Activated CD4-positive, alpha-beta T cell treated with anti-CD3 and anti-CD28 coated beads, Interleukin-2, amount 10 ng/mL, durations not matched to agents 24 days and 14 days (primary cell): ENCODE measurements at regions of chr13 and their contacts with region 1.

Region 1: DNA sequence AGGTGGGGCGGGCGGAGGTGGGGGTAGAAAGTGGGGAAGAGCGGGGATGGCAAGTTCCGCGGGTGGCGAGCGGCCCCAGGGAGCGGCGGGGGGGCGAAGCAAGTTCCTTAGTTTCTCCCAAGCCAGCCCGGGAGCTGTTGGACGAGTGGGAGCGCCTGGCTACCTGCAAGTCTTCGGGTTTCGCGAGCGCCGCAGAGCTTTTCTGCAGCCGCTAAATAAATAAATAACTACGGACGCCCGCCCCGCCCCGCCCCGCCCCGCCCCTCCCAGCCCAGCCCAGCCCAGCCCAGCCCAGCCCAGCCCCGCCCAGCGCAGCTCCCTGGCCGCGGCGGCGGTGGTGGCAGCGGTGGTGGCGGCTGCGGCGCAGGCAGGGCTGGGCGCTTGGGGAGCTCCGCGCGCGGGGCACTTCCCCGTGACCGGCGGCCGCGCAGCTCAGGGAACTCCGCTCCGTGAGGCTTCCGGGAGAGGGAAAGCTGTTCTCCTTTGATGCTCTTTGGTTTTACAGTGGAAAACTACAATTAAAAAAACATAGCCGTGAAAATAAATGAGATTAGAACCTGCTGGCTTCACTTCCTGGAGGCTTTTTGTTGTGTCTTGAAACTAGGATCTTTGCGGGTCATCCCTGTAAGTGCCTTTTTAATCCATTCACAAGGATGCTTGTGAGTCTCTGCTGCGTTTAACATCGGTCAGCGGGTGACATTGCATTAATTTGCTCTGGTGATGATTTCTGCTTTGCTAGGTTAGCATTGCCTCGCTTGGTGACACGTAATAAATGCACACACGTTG is at the start of gene UBE2L5:
- DNase-seq: peak; percentile 95
- H3K4me3 Mint-ChIP-seq: peak within 1 kb of the TSS; percentile 89
- H3K27ac Mint-ChIP-seq: peak within 1 kb of the TSS; percentile 86
- H3K4me1 Mint-ChIP-seq: peaks cover 26% of the 10 kb centered on the region
- H3K27me3 Mint-ChIP-seq: no peaks in the 10 kb centered on the region
- total RNA-seq, gene UBE2L5: not detected in 2 replicates

Region 2: DNA sequence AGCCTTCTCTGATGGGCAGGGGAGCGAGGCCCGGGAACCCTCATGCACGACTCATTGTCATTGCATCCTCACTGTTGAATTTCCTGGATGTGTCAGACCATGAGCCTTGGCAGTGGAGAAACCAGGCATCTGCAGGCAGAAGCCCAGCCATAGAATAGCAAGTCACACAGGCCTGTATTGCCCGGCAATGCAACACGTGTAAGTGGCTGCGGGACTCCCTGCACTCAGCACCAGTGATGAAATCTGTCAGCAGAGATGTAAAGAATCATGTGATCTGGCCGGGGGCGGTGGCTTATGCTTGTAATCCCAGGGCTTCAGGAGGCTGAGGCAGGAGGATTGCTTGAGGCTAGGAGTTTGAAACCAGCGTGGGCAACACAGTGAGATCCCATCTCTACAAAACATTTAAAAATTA is 314.7 kb before region 1 on chr13:
- intact Hi-C with region 1: no loop called
- DNase-seq: no peak
- H3K4me3 Mint-ChIP-seq: no peak overlapping the region
- H3K27ac Mint-ChIP-seq: no peak overlapping the region
- H3K4me1 Mint-ChIP-seq: peaks cover 8% of the 10 kb centered on the region
- H3K27me3 Mint-ChIP-seq: peaks cover 23% of the 10 kb centered on the region

Region 3: GRCh38 chr13:30408319-30409101 is 13.7 kb before region 1 on chr13:
- intact Hi-C with region 1: loop called (anchors 1 kb)
- DNase-seq: peak; percentile 97
- H3K4me3 Mint-ChIP-seq: peak overlapping the region; percentile 73
- H3K27ac Mint-ChIP-seq: peak overlapping the region; percentile 80
- H3K4me1 Mint-ChIP-seq: peaks cover 23% of the 10 kb centered on the region
- H3K27me3 Mint-ChIP-seq: peaks cover 4% of the 10 kb centered on the region